Esophagus squamous epithelium (tissue), 5 donors: ENCODE measurements at regions of chr15 and their contacts with region 1.

Region 1: DNA sequence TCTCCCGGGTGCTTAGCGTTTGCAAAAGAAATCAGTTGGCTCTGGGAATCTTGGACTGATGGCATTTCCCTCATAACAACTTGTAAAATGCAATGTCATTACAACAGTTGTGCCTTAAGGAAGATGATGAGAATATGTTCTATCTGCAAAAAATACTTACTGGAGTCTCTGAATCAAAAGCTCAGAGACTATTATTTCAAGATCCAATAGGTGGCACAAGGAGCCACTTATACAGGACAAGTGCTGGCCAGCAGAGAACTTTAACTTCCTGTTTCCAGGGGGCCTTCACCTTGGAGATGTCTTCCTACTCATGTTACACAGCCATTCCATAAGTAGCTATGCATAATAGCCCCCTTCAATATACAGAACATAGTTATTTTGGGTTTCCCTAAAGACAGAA is 8.9 kb upstream of the RPS27L start:
- DNase-seq: no peak
- H3K4me3 ChIP-seq: no peak overlapping the region
- H3K27ac ChIP-seq: no peak overlapping the region
- H3K4me1 ChIP-seq: no peaks in the 10 kb centered on the region
- H3K27me3 ChIP-seq: no peaks in the 10 kb centered on the region
- CTCF ChIP-seq: peak in 1 of 6 experiments; percentile 28
- POLR2A ChIP-seq: no peak

Region 2: GRCh38 chr15:62928242-62928995 is 237.8 kb before region 1 on chr15:
- intact Hi-C with region 1: no loop called
- DNase-seq: no peak
- H3K4me3 ChIP-seq: no peak overlapping the region
- H3K27ac ChIP-seq: no peak overlapping the region
- H3K4me1 ChIP-seq: peaks cover 0 to 9% (median 0%) of the 10 kb centered on the region in 3 donors
- H3K27me3 ChIP-seq: peaks cover 0 to 17% (median 0%) of the 10 kb centered on the region in 4 donors
- CTCF ChIP-seq: no peak
- POLR2A ChIP-seq: no peak

Region 3: GRCh38 chr15:63218100-63218808 is 52.0 kb after region 1 on chr15:
- intact Hi-C with region 1: no loop called
- DNase-seq: no peak
- H3K4me3 ChIP-seq: no peak overlapping the region
- H3K27ac ChIP-seq: peak overlapping the region in 3 of 4 donors; percentile 4 to 62 (median 60)
- H3K4me1 ChIP-seq: peaks cover 0 to 53% (median 22%) of the 10 kb centered on the region in 3 donors
- H3K27me3 ChIP-seq: no peaks in the 10 kb centered on the region
- CTCF ChIP-seq: no peak
- POLR2A ChIP-seq: no peak

Region 4: DNA sequence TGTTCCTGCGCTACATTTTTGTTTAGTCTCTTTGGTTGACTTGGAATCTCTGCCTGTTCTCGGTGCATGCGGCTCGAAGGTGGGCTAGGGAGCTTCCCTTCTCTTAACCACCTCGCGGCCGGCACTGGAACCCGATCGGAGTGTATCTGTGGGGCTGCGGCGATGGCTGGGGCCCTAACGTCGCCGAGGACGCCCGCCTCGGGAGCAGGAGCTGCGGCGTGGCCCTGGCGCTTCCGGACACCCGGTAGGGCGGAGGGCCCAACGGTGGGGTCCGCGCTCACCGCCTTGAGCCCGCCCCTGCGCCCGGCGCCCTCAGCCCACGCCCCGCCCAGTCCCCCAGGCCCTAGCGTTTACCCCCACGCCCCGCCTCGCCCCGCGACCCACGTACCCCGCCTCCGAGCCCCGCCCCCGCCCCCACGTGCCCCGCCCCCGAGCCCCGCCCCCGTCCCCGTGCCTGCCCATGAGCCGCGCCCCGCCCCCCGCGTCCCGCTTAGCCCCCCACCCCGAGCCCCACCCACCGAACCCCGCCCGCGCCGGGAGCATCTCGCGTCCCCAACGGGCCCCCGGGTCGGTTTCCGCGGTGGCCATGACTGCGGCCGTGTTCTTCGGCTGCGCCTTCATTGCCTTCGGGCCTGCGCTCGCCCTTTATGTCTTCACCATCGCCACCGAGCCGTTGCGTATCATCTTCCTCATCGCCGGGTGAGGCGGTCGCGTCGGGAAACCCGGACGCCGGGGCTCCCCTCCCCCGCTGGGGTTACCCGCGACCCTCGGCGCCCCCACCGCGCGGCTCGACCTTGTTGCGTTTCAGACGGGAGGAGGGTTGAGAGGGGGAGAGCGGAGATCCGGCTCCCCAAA is 111.0 kb after region 1 on chr15 and contains the start of gene APH1B:
- intact Hi-C with region 1: loop called (anchors 10 kb)
- DNase-seq: peak; percentile 43
- H3K4me3 ChIP-seq: peak within 1 kb of the TSS; percentile 60 to 95 (median 83)
- H3K27ac ChIP-seq: peak within 1 kb of the TSS; percentile 80 to 94 (median 90)
- H3K4me1 ChIP-seq: peaks cover 5 to 29% (median 5%) of the 10 kb centered on the region in 3 donors
- H3K27me3 ChIP-seq: no peaks in the 10 kb centered on the region
- CTCF ChIP-seq: peak in 2 of 6 experiments; percentile 11 to 13
- POLR2A ChIP-seq: peak in 2 of 4 donors; percentile 51 to 53
- total RNA-seq, gene APH1B: 0.53 to 7.8 (median 3.3) TPM

Region 5: DNA sequence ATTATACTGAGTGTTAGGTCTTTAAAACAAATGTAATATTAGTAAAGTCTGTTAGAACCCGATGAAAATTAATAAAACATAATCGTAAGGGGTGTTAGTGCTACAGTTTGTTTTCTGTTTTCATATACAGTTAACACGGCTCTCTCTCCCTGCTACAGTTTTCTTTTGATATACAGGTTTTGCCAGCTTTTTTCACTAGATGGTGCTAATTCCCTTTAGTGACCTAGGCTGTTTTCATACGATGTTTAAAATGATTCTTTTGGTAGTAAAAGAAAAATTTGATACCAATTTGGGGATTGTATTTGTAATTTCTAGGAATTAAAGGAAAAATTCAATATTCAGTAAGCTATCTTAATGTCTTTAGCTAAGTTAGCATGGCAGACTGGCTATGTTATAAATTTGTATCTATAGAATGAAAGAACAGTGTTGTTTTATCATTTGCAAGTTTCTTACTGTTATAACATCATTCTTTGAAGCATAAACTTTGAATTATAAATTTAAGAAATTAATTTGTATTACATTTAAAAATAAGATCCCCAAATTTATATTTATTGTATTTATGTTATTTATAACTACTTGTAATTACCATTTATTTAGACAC is 122.7 kb after region 1 on chr15:
- intact Hi-C with region 1: no loop called
- DNase-seq: no peak
- H3K4me3 ChIP-seq: no peak overlapping the region
- H3K27ac ChIP-seq: no peak overlapping the region
- H3K4me1 ChIP-seq: peaks cover 0 to 6% (median 0%) of the 10 kb centered on the region in 3 donors
- H3K27me3 ChIP-seq: no peaks in the 10 kb centered on the region
- CTCF ChIP-seq: peak in 5 of 6 experiments; percentile 32 to 75 (median 67)
- POLR2A ChIP-seq: no peak